ENCODE measurements at regions of chr7 and their contacts with region 1.

Region 1: GRCh38 chr7:139359366-139360209 is at the start of gene LUC7L2:
- DNase-seq: peak; percentile 98 to 100 (median 99)
- ATAC-seq: peak; percentile 75
- H3K4me3 Mint-ChIP-seq: peak within 1 kb of the TSS; percentile 94 to 99 (median 98)
- H3K27ac Mint-ChIP-seq: peak within 1 kb of the TSS; percentile 91 to 100 (median 99)
- H3K4me1 Mint-ChIP-seq: peaks cover 8 to 62% (median 43%) of the 10 kb centered on the region in 4 donors
- H3K27me3 Mint-ChIP-seq: no peaks in the 10 kb centered on the region
- polyA plus RNA-seq, gene LUC7L2: 51.6 to 80.6 (median 55.2) TPM

Region 2: GRCh38 chr7:139340037-139340807 is 19.4 kb before region 1 on chr7:
- POLR2A ChIA-PET with region 1: interaction called, 78 read pairs
- DNase-seq: peak; percentile 94 to 100 (median 98)
- ATAC-seq: peak; percentile 81 to 86
- H3K4me3 Mint-ChIP-seq: peak overlapping the region; percentile 93 to 100 (median 99)
- H3K27ac Mint-ChIP-seq: peak overlapping the region; percentile 98 to 100 (median 100)
- H3K4me1 Mint-ChIP-seq: peaks cover 23 to 43% (median 41%) of the 10 kb centered on the region in 4 donors
- H3K27me3 Mint-ChIP-seq: peaks cover 0 to 7% (median 0%) of the 10 kb centered on the region in 5 donors

Region 3: GRCh38 chr7:139370301-139370942 is 10.8 kb after region 1 on chr7:
- POLR2A ChIA-PET with region 1: interaction called, 14 read pairs
- DNase-seq: no peak
- ATAC-seq: no peak
- H3K4me3 Mint-ChIP-seq: peak overlapping the region in 8 of 10 donors; percentile 7 to 64 (median 34)
- H3K27ac Mint-ChIP-seq: peak overlapping the region in 9 of 10 donors; percentile 7 to 75 (median 49)
- H3K4me1 Mint-ChIP-seq: peaks cover 36 to 83% (median 72%) of the 10 kb centered on the region in 4 donors
- H3K27me3 Mint-ChIP-seq: no peaks in the 10 kb centered on the region

Region 4: GRCh38 chr7:139393621-139394211 is 34.1 kb after region 1 on chr7:
- POLR2A ChIA-PET with region 1: no interaction called
- DNase-seq: no peak
- ATAC-seq: peak in 1 of 2 donors; percentile 7
- H3K4me3 Mint-ChIP-seq: peak overlapping the region in 5 of 10 donors; percentile 0 to 69 (median 41)
- H3K27ac Mint-ChIP-seq: peak overlapping the region; percentile 2 to 81 (median 57)
- H3K4me1 Mint-ChIP-seq: peaks cover 24 to 58% (median 50%) of the 10 kb centered on the region in 4 donors
- H3K27me3 Mint-ChIP-seq: no peaks in the 10 kb centered on the region

Region 5: GRCh38 chr7:139618482-139619366 is 259.1 kb after region 1 on chr7:
- POLR2A ChIA-PET with region 1: no interaction called
- DNase-seq: peak; percentile 15 to 77 (median 40)
- ATAC-seq: peak in 1 of 2 donors; percentile 24
- H3K4me3 Mint-ChIP-seq: no peak overlapping the region
- H3K27ac Mint-ChIP-seq: peak overlapping the region in 4 of 10 donors; percentile 44 to 90 (median 69)
- H3K4me1 Mint-ChIP-seq: peaks cover 3 to 12% (median 9%) of the 10 kb centered on the region in 4 donors
- H3K27me3 Mint-ChIP-seq: no peaks in the 10 kb centered on the region

Measured in naive thymus-derived CD8-positive, alpha-beta T cell (primary cell).